GM12878 (cell line): ENCODE measurements at regions of chr12 and their contacts with region 1.

Region 1: GRCh38 chr12:63843721-63844390 is 644 bp upstream of the SRGAP1 start:
- DNase-seq: peak; percentile 28
- ATAC-seq: peak; percentile 96
- H3K4me3 ChIP-seq: peak overlapping the region; percentile 81
- H3K27ac ChIP-seq: no peak overlapping the region
- H3K4me1 ChIP-seq: peaks cover 5% of the 10 kb centered on the region; the same call in 1 of the 2 replicates
- H3K27me3 ChIP-seq: peaks cover 2 to 6% of the 10 kb centered on the region in 2 experiments; a peak in 3 of 4 replicates
- CTCF ChIP-seq: peak; percentile 93 to 98 (median 94)
- EP300 ChIP-seq: no peak
- POLR2A ChIP-seq: peak; percentile 34; the same call in 1 of the 2 replicates
- RAD21 ChIP-seq: peak; percentile 94

Region 2: GRCh38 chr12:63853978-63854377 is 10.1 kb after region 1 on chr12:
- CTCF ChIA-PET with region 1: interaction called, 39 read pairs
- POLR2A ChIA-PET with region 1: interaction called, 3 read pairs
- RAD21 ChIA-PET with region 1: interaction called, 11 read pairs
- SMC1A ChIA-PET with region 1: interaction called, 10 read pairs
- in situ Hi-C with region 1: no loop called
- intact Hi-C with region 1: no loop called
- DNase-seq: no peak
- ATAC-seq: peak; percentile 35
- H3K4me3 ChIP-seq: no peak overlapping the region
- H3K27ac ChIP-seq: no peak overlapping the region
- H3K4me1 ChIP-seq: no peaks in the 10 kb centered on the region
- H3K27me3 ChIP-seq: no peaks in the 10 kb centered on the region
- CTCF ChIP-seq: no peak
- EP300 ChIP-seq: no peak
- POLR2A ChIP-seq: no peak
- RAD21 ChIP-seq: no peak

Region 3: GRCh38 chr12:63949902-63950301 is 106.0 kb after region 1 on chr12:
- CTCF ChIA-PET with region 1: no interaction called
- POLR2A ChIA-PET with region 1: no interaction called
- RAD21 ChIA-PET with region 1: no interaction called
- SMC1A ChIA-PET with region 1: no interaction called
- in situ Hi-C with region 1: no loop called
- intact Hi-C with region 1: no loop called
- DNase-seq: no peak
- ATAC-seq: no peak
- H3K4me3 ChIP-seq: no peak overlapping the region
- H3K27ac ChIP-seq: no peak overlapping the region
- H3K4me1 ChIP-seq: no peaks in the 10 kb centered on the region
- H3K27me3 ChIP-seq: no peaks in the 10 kb centered on the region
- CTCF ChIP-seq: no peak
- EP300 ChIP-seq: no peak
- POLR2A ChIP-seq: no peak
- RAD21 ChIP-seq: no peak

Region 4: DNA sequence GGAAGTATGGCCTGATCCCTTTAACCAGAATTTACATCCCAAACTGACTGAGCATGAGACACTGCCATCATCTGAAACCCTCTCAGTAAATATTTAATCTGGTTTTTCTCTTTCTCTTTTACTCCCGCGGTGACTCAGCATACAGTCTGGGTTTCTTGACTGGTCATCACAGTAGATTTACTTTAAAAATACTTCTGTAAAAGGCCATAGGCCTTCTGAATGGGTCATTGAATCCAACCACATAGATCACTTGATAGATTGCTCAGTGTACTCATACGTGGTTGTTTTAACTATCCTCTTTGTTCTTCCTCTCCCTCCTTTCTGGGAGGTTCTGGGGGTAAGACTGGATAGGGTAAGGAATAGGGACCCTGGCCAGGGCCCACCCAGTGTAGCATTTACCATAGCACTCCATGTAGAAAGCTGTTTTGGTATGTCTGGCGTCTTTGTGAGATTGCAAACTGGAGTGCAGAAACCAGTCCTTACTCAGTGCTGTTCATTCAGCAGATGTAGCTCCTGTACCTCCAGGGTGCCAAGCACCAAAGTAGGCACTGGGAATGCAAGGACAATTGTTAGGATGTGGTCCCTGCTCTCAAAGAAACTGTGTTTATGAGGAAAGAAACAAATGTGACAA is 166.3 kb after region 1 on chr12:
- CTCF ChIA-PET with region 1: interaction called, 3 read pairs
- POLR2A ChIA-PET with region 1: no interaction called
- RAD21 ChIA-PET with region 1: no interaction called
- SMC1A ChIA-PET with region 1: no interaction called
- in situ Hi-C with region 1: no loop called
- intact Hi-C with region 1: loop called (anchors 10 kb)
- DNase-seq: no peak
- ATAC-seq: peak; percentile 94
- H3K4me3 ChIP-seq: no peak overlapping the region
- H3K27ac ChIP-seq: no peak overlapping the region
- H3K4me1 ChIP-seq: no peaks in the 10 kb centered on the region; the same call in 1 of the 2 replicates
- H3K27me3 ChIP-seq: no peaks in the 10 kb centered on the region
- CTCF ChIP-seq: no peak
- EP300 ChIP-seq: peak in 1 of 2 experiments; percentile 13; a peak in 1 of 4 replicates
- POLR2A ChIP-seq: no peak
- RAD21 ChIP-seq: no peak

Region 5: DNA sequence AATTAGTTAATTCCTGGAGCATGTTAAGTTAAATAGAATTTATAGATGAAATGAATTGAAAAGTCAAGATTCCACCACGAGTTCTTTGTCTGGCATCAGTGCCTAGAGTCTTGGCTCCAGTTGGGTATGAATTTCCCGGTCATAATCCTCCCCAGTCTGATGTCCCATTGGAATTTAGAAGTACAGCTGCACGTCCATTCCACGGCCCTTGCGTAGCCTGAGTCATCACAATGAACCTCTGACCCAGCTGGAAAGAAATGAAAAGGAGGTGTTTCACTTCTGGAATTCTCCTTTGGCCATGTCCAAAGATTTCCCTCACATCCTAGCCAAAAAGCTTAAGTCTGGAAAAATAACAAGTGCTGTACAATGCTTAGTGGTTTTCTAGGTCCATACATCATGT is 255.5 kb after region 1 on chr12:
- CTCF ChIA-PET with region 1: no interaction called
- POLR2A ChIA-PET with region 1: no interaction called
- RAD21 ChIA-PET with region 1: interaction called, 3 read pairs
- SMC1A ChIA-PET with region 1: no interaction called
- in situ Hi-C with region 1: no loop called
- intact Hi-C with region 1: loop called (anchors 10 kb)
- DNase-seq: no peak
- ATAC-seq: no peak
- H3K4me3 ChIP-seq: no peak overlapping the region
- H3K27ac ChIP-seq: no peak overlapping the region
- H3K4me1 ChIP-seq: no peaks in the 10 kb centered on the region
- H3K27me3 ChIP-seq: no peaks in the 10 kb centered on the region
- CTCF ChIP-seq: no peak
- EP300 ChIP-seq: no peak
- POLR2A ChIP-seq: no peak
- RAD21 ChIP-seq: no peak

Region 6: DNA sequence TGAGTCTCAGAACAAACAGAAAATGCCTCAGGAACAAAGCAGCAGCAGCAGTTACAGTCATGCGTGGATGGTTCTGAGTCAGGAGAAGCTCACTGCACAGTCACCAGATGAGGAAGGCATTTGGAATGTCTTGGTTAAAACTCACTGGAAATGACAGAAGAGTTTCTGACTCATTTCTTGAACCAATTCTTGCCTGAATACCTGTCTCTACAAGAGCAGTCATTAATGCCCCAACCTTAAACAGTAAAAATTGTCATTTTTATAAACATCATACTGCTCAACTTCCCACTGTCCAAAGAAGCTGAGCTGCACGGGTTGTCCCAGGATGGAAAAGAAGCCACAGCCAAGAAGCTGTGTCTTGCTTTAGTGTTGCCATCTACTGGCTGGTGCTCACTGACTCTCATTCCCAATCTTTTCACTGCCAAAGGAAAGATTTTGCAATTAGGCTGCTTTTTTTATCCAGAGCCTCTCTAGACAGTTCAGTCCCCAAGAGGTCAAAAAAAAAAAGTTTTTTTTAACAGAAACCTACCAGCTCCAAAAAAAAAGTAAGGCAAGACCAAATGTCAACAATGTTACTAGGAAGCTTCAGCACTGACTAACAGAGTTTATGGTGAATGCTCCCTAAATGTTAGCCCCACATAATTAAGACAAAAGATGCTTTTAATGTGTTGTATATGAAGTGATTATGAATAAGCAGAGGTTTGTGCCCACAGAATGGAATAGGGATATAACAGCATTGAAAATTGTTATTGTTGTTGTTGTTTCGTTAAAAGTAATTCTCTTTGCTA is 337.8 kb after region 1 on chr12:
- CTCF ChIA-PET with region 1: interaction called, 7 read pairs
- POLR2A ChIA-PET with region 1: no interaction called
- RAD21 ChIA-PET with region 1: interaction called, 6 read pairs
- SMC1A ChIA-PET with region 1: interaction called, 4 read pairs
- in situ Hi-C with region 1: no loop called
- intact Hi-C with region 1: loop called (anchors 5 kb)
- DNase-seq: no peak
- ATAC-seq: no peak
- H3K4me3 ChIP-seq: no peak overlapping the region
- H3K27ac ChIP-seq: no peak overlapping the region
- H3K4me1 ChIP-seq: no peaks in the 10 kb centered on the region
- H3K27me3 ChIP-seq: no peaks in the 10 kb centered on the region
- CTCF ChIP-seq: peak; percentile 6 to 40 (median 18); a peak in 3 of 6 replicates
- EP300 ChIP-seq: no peak
- POLR2A ChIP-seq: no peak
- RAD21 ChIP-seq: no peak

Region 7: DNA sequence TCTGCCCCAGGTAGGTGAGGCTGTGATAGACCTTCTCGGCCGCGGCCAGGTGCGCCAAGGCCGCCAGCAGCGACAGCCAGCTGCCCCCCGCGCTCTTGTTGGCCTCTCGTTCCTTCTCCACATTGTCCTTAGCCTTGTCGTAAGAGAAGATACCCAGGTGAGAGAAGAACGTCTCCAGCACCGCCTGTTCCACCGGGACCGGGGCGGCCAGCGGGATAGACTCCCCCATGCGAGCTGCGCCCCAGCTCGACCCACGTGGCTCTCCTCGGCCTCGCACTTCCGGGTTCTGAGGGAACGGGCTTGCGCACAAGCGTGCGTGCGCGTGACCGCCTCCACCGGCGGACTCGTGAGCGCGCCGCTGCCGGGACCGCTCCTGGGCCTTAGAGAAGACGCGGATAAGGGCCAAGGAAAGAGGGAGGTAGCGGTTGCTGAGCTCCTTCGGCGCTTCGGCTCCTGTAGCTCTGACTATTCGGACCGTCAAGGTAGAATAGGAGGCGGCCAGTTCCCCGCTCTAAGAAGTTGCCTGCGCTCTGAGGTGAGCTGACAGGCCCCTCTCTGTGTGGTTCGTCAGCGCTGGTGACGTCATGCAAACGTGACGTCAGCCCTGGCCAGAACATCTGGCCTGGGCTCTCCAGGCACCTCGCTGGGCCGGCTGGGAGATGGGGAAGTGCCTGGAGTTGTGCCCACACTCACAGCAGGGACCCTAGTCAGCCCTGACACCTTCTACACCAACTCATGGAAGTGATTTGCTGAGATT is 378.3 kb after region 1 on chr12 and contains the start of gene KICS2:
- CTCF ChIA-PET with region 1: interaction called, 11 read pairs
- POLR2A ChIA-PET with region 1: no interaction called
- RAD21 ChIA-PET with region 1: interaction called, 8 read pairs
- SMC1A ChIA-PET with region 1: interaction called, 10 read pairs
- in situ Hi-C with region 1: no loop called
- intact Hi-C with region 1: no loop called
- DNase-seq: peak; percentile 69
- ATAC-seq: peak; percentile 92
- H3K4me3 ChIP-seq: peak within 1 kb of the TSS; percentile 87
- H3K27ac ChIP-seq: peak within 1 kb of the TSS; percentile 64
- H3K4me1 ChIP-seq: no peaks in the 10 kb centered on the region; the same call in 1 of the 2 replicates
- H3K27me3 ChIP-seq: no peaks in the 10 kb centered on the region
- CTCF ChIP-seq: no peak
- EP300 ChIP-seq: no peak
- POLR2A ChIP-seq: peak; percentile 99
- RAD21 ChIP-seq: no peak
- polyA plus RNA-seq, gene KICS2: 3.9 to 4.4 TPM

Region 8: DNA sequence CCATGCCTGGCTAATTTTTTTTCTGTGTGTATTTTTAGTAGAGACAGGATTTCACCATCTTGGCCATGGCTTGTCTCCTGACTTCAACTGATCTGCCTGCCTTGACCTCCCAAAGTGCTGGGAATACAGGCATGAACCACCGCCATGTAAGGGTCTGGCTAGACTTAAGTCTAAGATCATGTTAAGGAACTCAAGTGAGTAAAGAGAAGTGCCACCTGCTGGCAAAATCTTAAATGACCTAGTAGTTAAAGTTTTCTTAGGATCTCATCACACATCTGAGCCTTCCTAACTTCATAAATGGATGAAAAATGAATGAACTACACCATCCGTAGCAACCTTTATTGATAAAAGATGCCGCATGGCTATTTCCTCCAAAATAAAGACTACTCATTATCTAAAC is 548.4 kb after region 1 on chr12:
- CTCF ChIA-PET with region 1: no interaction called
- POLR2A ChIA-PET with region 1: no interaction called
- RAD21 ChIA-PET with region 1: no interaction called
- SMC1A ChIA-PET with region 1: no interaction called
- in situ Hi-C with region 1: loop called (anchors 25 kb)
- intact Hi-C with region 1: loop called (anchors 5 kb)
- DNase-seq: no peak
- ATAC-seq: peak; percentile 76
- H3K4me3 ChIP-seq: no peak overlapping the region
- H3K27ac ChIP-seq: no peak overlapping the region
- H3K4me1 ChIP-seq: no peaks in the 10 kb centered on the region
- H3K27me3 ChIP-seq: no peaks in the 10 kb centered on the region
- CTCF ChIP-seq: peak in 2 of 3 experiments; percentile 28 to 32; a peak in 3 of 6 replicates
- EP300 ChIP-seq: no peak
- POLR2A ChIP-seq: no peak
- RAD21 ChIP-seq: peak; percentile 35; the same call in 1 of the 2 replicates